Activated CD4-positive, alpha-beta memory T cell treated with anti-CD3 and anti-CD28 coated beads for 36 hours (primary cell): ENCODE measurements at regions of chr3 and their contacts with region 1.

Region 1: DNA sequence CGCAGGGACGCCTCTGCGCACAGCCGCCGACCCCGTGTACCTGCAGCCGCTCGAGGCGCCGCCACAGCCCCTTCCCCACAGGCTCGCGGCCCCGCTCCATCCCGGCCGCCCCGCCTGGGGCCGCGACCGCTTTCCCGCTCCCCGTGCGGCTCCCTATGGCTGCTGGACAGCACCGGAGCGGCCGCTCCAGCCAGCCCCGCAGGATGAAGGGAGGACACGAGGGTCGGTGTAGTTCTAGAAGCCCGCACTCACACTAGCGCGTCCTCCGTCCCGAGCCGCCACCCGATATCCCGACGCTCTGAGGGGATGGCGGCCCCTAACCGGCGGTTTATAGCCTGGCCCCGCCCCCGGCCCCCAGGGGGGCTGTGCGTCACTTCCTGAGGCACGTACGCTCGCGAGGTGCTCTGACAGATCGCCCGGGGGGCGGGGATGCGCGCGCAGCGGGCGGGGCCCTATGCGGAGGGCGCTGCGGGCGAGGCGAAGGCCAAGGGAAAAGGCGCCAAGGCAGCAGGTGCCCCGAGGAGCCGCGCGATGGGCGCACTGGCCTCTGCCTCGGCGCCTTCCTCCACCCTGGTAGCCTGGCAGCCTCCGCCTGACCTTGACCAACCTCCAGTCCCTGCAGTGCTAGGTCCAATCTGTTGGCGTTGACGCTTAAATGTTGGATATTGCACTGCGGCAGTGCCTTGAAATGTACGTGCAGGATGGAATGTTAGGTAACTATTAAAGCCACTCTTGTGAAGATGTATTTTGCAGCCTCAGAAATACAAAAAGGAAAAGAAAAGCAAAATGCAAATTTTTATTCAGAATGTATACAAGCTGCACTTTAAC is at the start of gene TFRC:
- DNase-seq: peak; percentile 97
- H3K4me3 Mint-ChIP-seq: peak within 1 kb of the TSS; percentile 99
- H3K27ac Mint-ChIP-seq: peak within 1 kb of the TSS; percentile 92
- H3K4me1 Mint-ChIP-seq: peaks cover 31% of the 10 kb centered on the region
- H3K27me3 Mint-ChIP-seq: no peaks in the 10 kb centered on the region
- total RNA-seq, gene TFRC: 341 to 347 TPM

Region 2: GRCh38 chr3:195886181-195887141 is 195.5 kb before region 1 on chr3:
- CTCF ChIA-PET with region 1: no interaction called
- POLR2A ChIA-PET with region 1: no interaction called
- intact Hi-C with region 1: no loop called
- DNase-seq: no peak
- H3K4me3 Mint-ChIP-seq: no peak overlapping the region
- H3K27ac Mint-ChIP-seq: no peak overlapping the region
- H3K4me1 Mint-ChIP-seq: peaks cover under 1% of the 10 kb centered on the region
- H3K27me3 Mint-ChIP-seq: no peaks in the 10 kb centered on the region

Region 3: GRCh38 chr3:196111939-196112386 is 30.0 kb after region 1 on chr3:
- CTCF ChIA-PET with region 1: no interaction called
- POLR2A ChIA-PET with region 1: interaction called, 3 read pairs
- intact Hi-C with region 1: loop called (anchors 1 kb)
- DNase-seq: peak; percentile 58
- H3K4me3 Mint-ChIP-seq: peak overlapping the region; percentile 33
- H3K27ac Mint-ChIP-seq: peak overlapping the region; percentile 84
- H3K4me1 Mint-ChIP-seq: peaks cover 19% of the 10 kb centered on the region
- H3K27me3 Mint-ChIP-seq: no peaks in the 10 kb centered on the region

Region 4: DNA sequence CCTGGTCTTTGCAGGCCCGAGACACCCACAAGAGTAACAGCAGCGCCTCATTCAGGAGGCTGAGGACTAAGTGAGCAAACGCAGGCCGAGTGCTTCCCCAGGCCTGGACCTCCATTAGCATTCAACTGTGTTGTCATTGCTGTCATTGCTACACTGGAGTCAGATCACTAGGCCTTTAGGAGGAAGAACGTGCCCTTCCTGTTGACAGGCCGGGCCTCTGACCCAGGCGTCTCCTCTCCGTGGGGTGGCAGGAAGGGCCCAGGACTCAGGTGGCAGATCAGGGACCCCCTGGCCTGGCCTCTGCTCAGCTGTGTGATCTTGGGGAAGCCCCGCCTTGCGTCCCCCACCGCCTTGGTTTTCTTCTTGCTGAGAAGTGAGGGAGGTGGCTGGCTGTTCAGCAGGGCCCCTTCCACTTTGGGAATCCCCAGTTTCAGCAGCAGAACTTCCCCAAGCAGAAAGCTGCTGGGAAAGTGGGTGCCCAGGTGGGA is 110.1 kb after region 1 on chr3:
- CTCF ChIA-PET with region 1: interaction called, 292 read pairs
- POLR2A ChIA-PET with region 1: interaction called, 3 read pairs
- intact Hi-C with region 1: loop called (anchors 1 kb)
- DNase-seq: peak; percentile 78
- H3K4me3 Mint-ChIP-seq: peak overlapping the region; percentile 50
- H3K27ac Mint-ChIP-seq: peak overlapping the region; percentile 86
- H3K4me1 Mint-ChIP-seq: peaks cover 48% of the 10 kb centered on the region
- H3K27me3 Mint-ChIP-seq: no peaks in the 10 kb centered on the region